ENCODE measurements at regions of chr3 and their contacts with region 1.

Region 1: GRCh38 chr3:14203521-14204079 is 25.0 kb downstream of the LSM3 start:
- DNase-seq: no peak
- ATAC-seq: peak; percentile 93
- H3K4me3 ChIP-seq: no peak overlapping the region
- H3K27ac ChIP-seq: no peak overlapping the region
- H3K4me1 ChIP-seq: no peaks in the 10 kb centered on the region
- H3K27me3 ChIP-seq: no peaks in the 10 kb centered on the region
- CTCF ChIP-seq: peak; percentile 75 to 89 (median 84)
- EP300 ChIP-seq: no peak
- POLR2A ChIP-seq: no peak
- RAD21 ChIP-seq: peak; percentile 79

Region 2: GRCh38 chr3:13895155-13896105 is 308.2 kb before region 1 on chr3:
- CTCF ChIA-PET with region 1: interaction called, 16 read pairs
- POLR2A ChIA-PET with region 1: no interaction called
- RAD21 ChIA-PET with region 1: interaction called, 14 read pairs
- SMC1A ChIA-PET with region 1: interaction called, 9 read pairs
- in situ Hi-C with region 1: no loop called
- intact Hi-C with region 1: loop called (anchors 10 kb)
- DNase-seq: peak; percentile 47
- ATAC-seq: peak; percentile 100
- H3K4me3 ChIP-seq: peak overlapping the region; percentile 67
- H3K27ac ChIP-seq: no peak overlapping the region
- H3K4me1 ChIP-seq: no peaks in the 10 kb centered on the region
- H3K27me3 ChIP-seq: peaks cover 0 to 3% of the 10 kb centered on the region in 2 experiments; a peak in 1 of 4 replicates
- CTCF ChIP-seq: no peak
- EP300 ChIP-seq: no peak
- POLR2A ChIP-seq: no peak
- RAD21 ChIP-seq: no peak

Region 3: GRCh38 chr3:14188041-14188754 is 15.4 kb before region 1 on chr3:
- CTCF ChIA-PET with region 1: interaction called, 28 read pairs
- POLR2A ChIA-PET with region 1: no interaction called
- RAD21 ChIA-PET with region 1: interaction called, 3 read pairs
- SMC1A ChIA-PET with region 1: interaction called, 5 read pairs
- in situ Hi-C with region 1: no loop called
- intact Hi-C with region 1: no loop called
- DNase-seq: no peak
- ATAC-seq: no peak
- H3K4me3 ChIP-seq: no peak overlapping the region
- H3K27ac ChIP-seq: no peak overlapping the region
- H3K4me1 ChIP-seq: no peaks in the 10 kb centered on the region; the same call in 1 of the 2 replicates
- H3K27me3 ChIP-seq: no peaks in the 10 kb centered on the region
- CTCF ChIP-seq: no peak
- EP300 ChIP-seq: no peak
- POLR2A ChIP-seq: no peak
- RAD21 ChIP-seq: no peak

Region 4: GRCh38 chr3:14231998-14232501 is 28.4 kb after region 1 on chr3:
- CTCF ChIA-PET with region 1: interaction called, 12 read pairs
- POLR2A ChIA-PET with region 1: no interaction called
- RAD21 ChIA-PET with region 1: no interaction called
- SMC1A ChIA-PET with region 1: no interaction called
- in situ Hi-C with region 1: no loop called
- intact Hi-C with region 1: no loop called
- DNase-seq: no peak
- ATAC-seq: no peak
- H3K4me3 ChIP-seq: no peak overlapping the region
- H3K27ac ChIP-seq: no peak overlapping the region
- H3K4me1 ChIP-seq: no peaks in the 10 kb centered on the region
- H3K27me3 ChIP-seq: peaks cover 0 to 2% of the 10 kb centered on the region in 2 experiments; a peak in 1 of 4 replicates
- CTCF ChIP-seq: no peak
- EP300 ChIP-seq: no peak
- POLR2A ChIP-seq: no peak
- RAD21 ChIP-seq: no peak

Region 5: GRCh38 chr3:14431892-14432834 is 228.6 kb after region 1 on chr3:
- CTCF ChIA-PET with region 1: interaction called, 16 read pairs
- POLR2A ChIA-PET with region 1: no interaction called
- RAD21 ChIA-PET with region 1: interaction called, 7 read pairs
- SMC1A ChIA-PET with region 1: interaction called, 4 read pairs
- in situ Hi-C with region 1: no loop called
- intact Hi-C with region 1: no loop called
- DNase-seq: peak; percentile 90
- ATAC-seq: peak; percentile 87
- H3K4me3 ChIP-seq: peak overlapping the region; percentile 60
- H3K27ac ChIP-seq: peak overlapping the region; percentile 99
- H3K4me1 ChIP-seq: peaks cover 66% of the 10 kb centered on the region
- H3K27me3 ChIP-seq: no peaks in the 10 kb centered on the region
- CTCF ChIP-seq: no peak
- EP300 ChIP-seq: peak; percentile 51 to 71; a peak in 2 of 4 replicates
- POLR2A ChIP-seq: peak; percentile 87
- RAD21 ChIP-seq: no peak

Region 6: GRCh38 chr3:14467814-14468620 is 264.4 kb after region 1 on chr3:
- CTCF ChIA-PET with region 1: interaction called, 46 read pairs
- POLR2A ChIA-PET with region 1: no interaction called
- RAD21 ChIA-PET with region 1: interaction called, 26 read pairs
- SMC1A ChIA-PET with region 1: interaction called, 26 read pairs
- in situ Hi-C with region 1: no loop called
- intact Hi-C with region 1: loop called (anchors 1 kb)
- DNase-seq: no peak
- ATAC-seq: peak; percentile 89
- H3K4me3 ChIP-seq: no peak overlapping the region
- H3K27ac ChIP-seq: no peak overlapping the region
- H3K4me1 ChIP-seq: no peaks in the 10 kb centered on the region
- H3K27me3 ChIP-seq: no peaks in the 10 kb centered on the region
- CTCF ChIP-seq: peak; percentile 67 to 85 (median 84)
- EP300 ChIP-seq: no peak
- POLR2A ChIP-seq: no peak
- RAD21 ChIP-seq: peak; percentile 79

Region 7: DNA sequence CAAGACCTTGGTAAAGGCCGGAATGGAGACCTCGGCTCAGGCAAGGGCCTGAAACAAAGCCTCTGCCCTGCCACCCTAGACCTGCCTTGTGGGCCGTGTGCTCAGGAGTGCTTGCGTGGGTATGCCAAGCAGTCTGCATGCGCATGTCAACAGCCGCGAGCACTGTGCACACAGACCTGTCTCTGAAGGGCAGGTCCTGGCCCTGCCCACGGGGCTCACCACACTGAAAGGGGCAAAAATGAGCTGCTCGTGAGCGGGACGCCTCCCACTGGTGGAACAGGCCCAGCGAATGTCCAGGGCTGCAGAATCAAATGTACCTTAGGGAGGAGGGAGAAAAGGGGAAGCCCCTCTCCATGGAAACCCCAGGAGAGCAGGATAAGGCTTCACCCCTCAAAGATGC is 570.8 kb after region 1 on chr3:
- CTCF ChIA-PET with region 1: no interaction called
- POLR2A ChIA-PET with region 1: no interaction called
- RAD21 ChIA-PET with region 1: no interaction called
- SMC1A ChIA-PET with region 1: no interaction called
- in situ Hi-C with region 1: no loop called
- intact Hi-C with region 1: no loop called
- DNase-seq: no peak
- ATAC-seq: no peak
- H3K4me3 ChIP-seq: no peak overlapping the region
- H3K27ac ChIP-seq: no peak overlapping the region
- H3K4me1 ChIP-seq: no peaks in the 10 kb centered on the region
- H3K27me3 ChIP-seq: no peaks in the 10 kb centered on the region
- CTCF ChIP-seq: no peak
- EP300 ChIP-seq: no peak
- POLR2A ChIP-seq: no peak
- RAD21 ChIP-seq: no peak

Measured in GM12878 (cell line).